PC-3 (cell line): ENCODE measurements at regions of chr2 and their contacts with region 1.

Region 1: DNA sequence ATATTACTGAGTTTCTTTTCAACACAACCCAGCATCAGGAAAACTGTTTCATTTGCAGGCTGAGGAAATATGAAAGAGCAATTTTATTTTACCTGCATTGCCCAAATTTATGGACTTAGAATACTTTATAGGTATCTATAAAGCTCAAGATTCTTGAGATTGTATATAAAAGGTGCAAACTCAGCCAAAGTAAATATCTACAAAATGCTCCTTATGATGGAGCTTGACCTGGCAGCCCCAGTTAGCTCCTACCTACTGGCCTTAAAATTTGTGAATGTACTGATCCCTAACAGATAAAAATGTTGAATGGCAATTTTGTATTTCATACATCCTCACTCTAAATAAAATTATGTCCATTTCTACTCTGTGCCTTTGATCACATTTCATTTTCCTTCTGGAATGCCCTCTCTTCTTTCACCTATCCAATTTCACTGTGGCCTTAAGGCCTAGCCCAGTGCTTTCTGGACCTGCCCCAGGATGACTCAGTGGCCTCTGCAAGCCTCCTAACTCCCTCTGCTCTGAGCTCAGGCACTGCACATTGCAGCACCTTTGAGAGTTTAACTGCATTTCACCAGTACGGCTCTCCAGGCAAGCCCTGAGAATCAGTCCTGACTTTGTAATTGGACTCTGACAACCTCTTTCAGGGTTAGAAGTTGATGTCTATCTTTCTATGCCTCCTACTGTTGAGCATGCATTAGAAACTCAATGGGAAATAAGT is 126.0 kb downstream of the ANTXR1 start:
- DNase-seq: peak; percentile 94
- ATAC-seq: peak; percentile 91
- H3K4me3 ChIP-seq: peak overlapping the region; percentile 38
- H3K27ac ChIP-seq: peak overlapping the region; percentile 91
- H3K4me1 ChIP-seq: peaks cover 55% of the 10 kb centered on the region
- H3K27me3 ChIP-seq: no peaks in the 10 kb centered on the region
- CTCF ChIP-seq: no peak

Region 2: GRCh38 chr2:69082430-69082997 is 56.4 kb before region 1 on chr2:
- CTCF ChIA-PET with region 1: no interaction called
- POLR2A ChIA-PET with region 1: interaction called, 4 read pairs
- intact Hi-C with region 1: loop called (anchors 2 kb)
- DNase-seq: peak; percentile 95
- ATAC-seq: peak; percentile 98
- H3K4me3 ChIP-seq: no peak overlapping the region
- H3K27ac ChIP-seq: peak overlapping the region; percentile 78
- H3K4me1 ChIP-seq: peaks cover 21% of the 10 kb centered on the region
- H3K27me3 ChIP-seq: no peaks in the 10 kb centered on the region
- CTCF ChIP-seq: no peak

Region 3: DNA sequence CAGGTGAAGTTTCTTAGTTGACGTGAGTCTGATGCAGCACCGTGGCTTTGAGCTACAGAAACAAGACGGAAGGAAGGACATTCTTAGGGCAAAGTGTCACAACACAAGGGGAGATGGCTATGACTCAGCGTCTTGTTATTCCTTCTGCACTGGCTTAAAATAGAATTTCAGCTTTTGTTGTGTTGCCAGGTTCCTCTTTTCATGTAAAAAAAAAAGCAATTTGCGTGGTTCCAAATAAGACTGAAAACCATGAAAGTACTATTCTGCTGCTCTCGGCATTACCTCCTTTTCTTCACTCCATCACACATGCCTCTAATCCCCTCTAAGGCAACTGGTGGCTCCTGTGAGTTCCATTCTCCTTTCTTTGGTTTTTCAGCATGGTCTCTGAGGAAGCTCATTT is 24.2 kb after region 1 on chr2:
- CTCF ChIA-PET with region 1: no interaction called
- POLR2A ChIA-PET with region 1: no interaction called
- intact Hi-C with region 1: loop called (anchors 2 kb)
- DNase-seq: peak; percentile 81
- ATAC-seq: peak; percentile 89
- H3K4me3 ChIP-seq: no peak overlapping the region
- H3K27ac ChIP-seq: no peak overlapping the region
- H3K4me1 ChIP-seq: peaks cover 18% of the 10 kb centered on the region
- H3K27me3 ChIP-seq: no peaks in the 10 kb centered on the region
- CTCF ChIP-seq: no peak

Region 4: GRCh38 chr2:69185807-69186206 is 46.9 kb after region 1 on chr2:
- CTCF ChIA-PET with region 1: no interaction called
- POLR2A ChIA-PET with region 1: no interaction called
- intact Hi-C with region 1: loop called (anchors 5 kb)
- DNase-seq: peak; percentile 82
- ATAC-seq: peak; percentile 96
- H3K4me3 ChIP-seq: no peak overlapping the region
- H3K27ac ChIP-seq: no peak overlapping the region
- H3K4me1 ChIP-seq: peaks cover 10% of the 10 kb centered on the region
- H3K27me3 ChIP-seq: no peaks in the 10 kb centered on the region
- CTCF ChIP-seq: no peak

Region 5: GRCh38 chr2:69734035-69734631 is 595.2 kb after region 1 on chr2:
- CTCF ChIA-PET with region 1: no interaction called
- POLR2A ChIA-PET with region 1: no interaction called
- intact Hi-C with region 1: no loop called
- DNase-seq: no peak
- ATAC-seq: no peak
- H3K4me3 ChIP-seq: no peak overlapping the region
- H3K27ac ChIP-seq: no peak overlapping the region
- H3K4me1 ChIP-seq: no peaks in the 10 kb centered on the region
- H3K27me3 ChIP-seq: no peaks in the 10 kb centered on the region
- CTCF ChIP-seq: no peak